Activated CD4-positive, alpha-beta T cell treated with anti-CD3 and anti-CD28 coated beads, Interleukin-2, amount 10 ng/mL, durations not matched to agents 24 days and 14 days (primary cell): ENCODE measurements at regions of chr6 and their contacts with region 1.

Region 1: DNA sequence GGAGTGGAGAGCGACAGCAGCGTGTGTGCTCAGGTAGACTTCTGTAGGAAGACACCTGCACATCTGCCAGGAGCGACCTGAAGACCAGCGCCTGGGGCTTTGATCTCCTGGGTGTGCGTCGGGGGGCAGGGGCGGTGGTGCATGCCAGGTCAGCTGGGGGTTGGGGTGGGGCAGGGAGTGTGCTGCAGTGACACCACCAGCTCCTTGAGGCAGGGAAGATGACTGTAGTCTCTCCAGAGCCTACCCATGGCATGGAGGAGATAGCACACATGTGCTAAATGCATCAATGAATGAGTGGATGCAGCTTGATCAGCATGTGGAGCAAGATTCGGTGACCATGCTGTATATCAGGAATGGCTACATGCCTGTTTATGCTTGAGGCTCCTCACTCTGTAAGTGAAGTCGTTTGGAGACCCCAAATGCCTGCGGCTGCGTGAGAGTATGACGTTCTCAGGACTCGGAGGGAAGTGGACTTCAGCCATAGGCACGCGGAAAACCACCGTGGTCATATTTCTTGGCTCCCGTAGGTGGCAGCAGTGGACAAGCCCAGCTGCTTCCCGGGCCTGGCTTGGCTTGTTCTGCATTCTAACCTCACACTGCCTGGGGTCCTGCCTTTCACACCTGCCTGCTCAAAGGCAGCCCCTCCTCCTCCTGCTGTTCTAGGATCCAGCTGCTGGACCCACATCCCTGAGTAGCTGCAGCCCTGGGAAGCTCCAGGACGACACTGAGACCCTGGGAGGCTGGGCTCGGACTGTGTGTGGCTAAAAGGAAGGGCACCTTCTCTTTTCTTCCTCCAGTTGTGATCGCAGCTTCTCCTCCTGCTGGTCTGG is 39.4 kb upstream of the KCNK16 start:
- DNase-seq: peak; percentile 83
- H3K4me3 Mint-ChIP-seq: no peak overlapping the region
- H3K27ac Mint-ChIP-seq: no peak overlapping the region
- H3K4me1 Mint-ChIP-seq: peaks cover 3% of the 10 kb centered on the region
- H3K27me3 Mint-ChIP-seq: no peaks in the 10 kb centered on the region

Region 2: DNA sequence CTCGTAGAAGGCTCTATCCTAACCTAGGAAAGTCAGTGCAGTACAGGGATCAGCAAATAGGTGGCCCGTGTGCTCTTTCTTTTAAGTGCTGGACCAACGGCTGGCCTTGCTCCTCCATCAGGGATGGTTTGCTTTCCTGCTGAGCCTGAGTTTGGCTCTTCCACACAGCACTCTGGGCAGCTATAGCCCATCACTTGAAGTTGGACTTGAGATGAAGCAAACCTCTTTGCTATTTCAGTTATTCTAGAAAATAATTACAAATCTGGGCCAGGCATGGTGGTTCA is 27.6 kb after region 1 on chr6:
- intact Hi-C with region 1: no loop called
- DNase-seq: no peak
- H3K4me3 Mint-ChIP-seq: no peak overlapping the region
- H3K27ac Mint-ChIP-seq: no peak overlapping the region
- H3K4me1 Mint-ChIP-seq: no peaks in the 10 kb centered on the region
- H3K27me3 Mint-ChIP-seq: peaks cover 2% of the 10 kb centered on the region

Region 3: GRCh38 chr6:39870950-39871349 is 509.1 kb after region 1 on chr6:
- intact Hi-C with region 1: loop called (anchors 10 kb)
- DNase-seq: no peak
- H3K4me3 Mint-ChIP-seq: no peak overlapping the region
- H3K27ac Mint-ChIP-seq: no peak overlapping the region
- H3K4me1 Mint-ChIP-seq: no peaks in the 10 kb centered on the region
- H3K27me3 Mint-ChIP-seq: peaks cover 2% of the 10 kb centered on the region

Region 4: GRCh38 chr6:39892490-39893129 is 530.7 kb after region 1 on chr6:
- intact Hi-C with region 1: loop called (anchors 10 kb)
- DNase-seq: peak; percentile 62
- H3K4me3 Mint-ChIP-seq: no peak overlapping the region
- H3K27ac Mint-ChIP-seq: no peak overlapping the region
- H3K4me1 Mint-ChIP-seq: no peaks in the 10 kb centered on the region
- H3K27me3 Mint-ChIP-seq: peaks cover 9% of the 10 kb centered on the region